PC-9 (cell line): ENCODE measurements at regions of chr1 and their contacts with region 1.

Region 1: DNA sequence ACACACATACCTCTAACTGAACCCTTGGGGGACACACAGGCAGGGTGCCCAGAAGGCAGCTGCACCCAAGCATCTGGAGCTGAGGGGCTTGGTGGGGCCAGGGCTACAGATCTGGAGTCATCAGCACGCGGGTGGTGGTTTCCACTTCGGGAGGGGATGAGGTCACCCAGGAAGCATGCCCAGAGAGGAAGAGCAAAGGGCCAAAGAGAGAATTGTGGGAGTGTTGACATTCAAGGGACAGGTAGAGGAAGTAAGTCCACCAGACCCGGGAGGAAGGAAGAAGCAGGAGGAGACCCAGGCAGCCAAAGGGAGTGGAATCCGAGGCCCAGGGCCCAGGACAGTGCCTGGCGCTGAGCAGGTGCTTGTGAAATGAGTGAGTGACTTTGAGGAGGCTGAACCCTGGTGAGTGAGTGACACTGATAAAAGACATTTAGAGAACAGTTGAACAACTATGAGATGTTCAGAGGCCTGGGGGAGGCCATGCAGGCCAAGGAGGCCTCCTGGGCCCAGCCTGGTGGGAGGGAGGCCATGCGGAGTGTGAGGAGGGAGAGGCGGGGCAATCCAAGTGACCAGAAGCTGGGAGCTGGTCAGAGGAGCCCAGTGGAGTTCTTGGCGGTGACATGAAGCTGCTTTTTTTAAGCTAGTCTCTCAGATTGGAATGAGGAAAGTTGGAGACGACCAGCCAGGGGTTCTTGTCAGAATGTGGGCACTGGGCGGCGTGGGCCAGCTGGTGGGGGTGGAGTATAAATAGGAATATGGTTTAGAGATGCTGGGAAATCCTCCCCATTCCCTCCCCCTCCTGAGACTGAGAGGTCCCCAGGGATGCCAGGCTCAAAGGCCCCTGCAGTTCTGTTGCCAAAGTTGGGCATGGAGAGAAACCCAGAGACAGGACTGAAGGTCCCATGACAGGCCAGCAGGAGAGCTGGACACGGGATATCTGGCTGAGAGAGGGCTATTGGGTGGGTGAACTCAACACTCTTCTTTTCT is 7.9 kb downstream of the CDK18 start:
- DNase-seq: no peak
- H3K4me3 ChIP-seq: no peak overlapping the region
- H3K27ac ChIP-seq: no peak overlapping the region
- H3K4me1 ChIP-seq: peaks cover 8% of the 10 kb centered on the region
- H3K27me3 ChIP-seq: no peaks in the 10 kb centered on the region
- CTCF ChIP-seq: no peak

Region 2: DNA sequence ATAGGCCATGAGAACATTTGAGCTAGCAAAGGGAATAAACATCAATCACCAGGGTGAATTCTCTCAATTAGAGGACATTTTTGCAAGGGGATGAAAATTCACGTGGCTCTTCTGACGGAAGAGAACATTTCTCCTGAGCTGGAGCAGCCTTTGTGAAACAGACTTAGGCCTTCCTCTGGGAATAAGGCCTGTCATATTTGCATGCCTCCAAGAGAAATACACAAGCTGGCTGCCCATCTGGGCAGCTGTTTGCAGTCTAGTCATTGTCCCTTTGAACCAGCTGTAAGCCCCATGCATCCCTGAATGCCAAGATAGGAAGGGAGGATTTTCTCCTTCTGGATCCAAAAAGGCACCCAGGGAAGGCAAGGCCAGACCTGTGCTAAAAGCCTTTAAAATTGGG is 96.0 kb before region 1 on chr1:
- CTCF ChIA-PET with region 1: no interaction called
- POLR2A ChIA-PET with region 1: interaction called, 10 read pairs
- intact Hi-C with region 1: no loop called
- DNase-seq: no peak
- H3K4me3 ChIP-seq: no peak overlapping the region
- H3K27ac ChIP-seq: no peak overlapping the region
- H3K4me1 ChIP-seq: no peaks in the 10 kb centered on the region
- H3K27me3 ChIP-seq: peaks cover 28% of the 10 kb centered on the region; the same call in 1 of the 2 replicates
- CTCF ChIP-seq: no peak

Region 3: DNA sequence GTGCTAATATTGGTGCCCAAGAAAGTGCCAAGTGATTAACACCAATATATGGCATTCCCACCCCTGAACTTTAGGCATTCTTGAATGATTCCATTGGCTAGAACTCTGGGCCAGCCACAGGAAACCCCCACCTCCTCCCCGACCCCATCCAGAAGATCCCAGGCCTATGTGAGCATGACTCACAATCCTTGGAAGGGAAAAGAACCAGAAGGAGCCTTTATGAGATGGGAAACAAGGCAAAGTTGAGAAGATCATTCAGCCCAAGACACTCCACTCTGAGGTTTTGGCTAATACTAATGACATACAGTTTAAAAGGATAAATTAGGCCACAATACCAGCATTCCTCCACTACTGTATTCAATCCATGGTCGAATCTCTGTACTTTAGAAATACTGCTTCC is 97.7 kb after region 1 on chr1:
- CTCF ChIA-PET with region 1: no interaction called
- POLR2A ChIA-PET with region 1: no interaction called
- intact Hi-C with region 1: no loop called
- DNase-seq: no peak
- H3K4me3 ChIP-seq: no peak overlapping the region
- H3K27ac ChIP-seq: no peak overlapping the region
- H3K4me1 ChIP-seq: no peaks in the 10 kb centered on the region
- H3K27me3 ChIP-seq: no peaks in the 10 kb centered on the region
- CTCF ChIP-seq: no peak

Region 4: GRCh38 chr1:205668951-205669340 is 156.6 kb after region 1 on chr1:
- CTCF ChIA-PET with region 1: no interaction called
- POLR2A ChIA-PET with region 1: no interaction called
- intact Hi-C with region 1: no loop called
- DNase-seq: no peak
- H3K4me3 ChIP-seq: no peak overlapping the region; the same call in 1 of the 2 replicates
- H3K27ac ChIP-seq: peak overlapping the region; percentile 45
- H3K4me1 ChIP-seq: peaks cover 98% of the 10 kb centered on the region
- H3K27me3 ChIP-seq: no peaks in the 10 kb centered on the region
- CTCF ChIP-seq: no peak